ENCODE measurements at regions of chr20 and their contacts with region 1.

Region 1: GRCh38 chr20:35883778-35884540 is 70.3 kb downstream of the SCAND1 start:
- DNase-seq: peak; percentile 72
- ATAC-seq: peak; percentile 98
- H3K4me3 Mint-ChIP-seq: no peak overlapping the region
- H3K27ac Mint-ChIP-seq: peak overlapping the region; percentile 85
- H3K4me1 Mint-ChIP-seq: peaks cover 11% of the 10 kb centered on the region
- H3K27me3 Mint-ChIP-seq: no peaks in the 10 kb centered on the region
- CTCF ChIP-seq: no peak

Region 2: GRCh38 chr20:35849706-35850105 is 34.3 kb before region 1 on chr20:
- CTCF ChIA-PET with region 1: interaction called, 11 read pairs
- POLR2A ChIA-PET with region 1: no interaction called
- DNase-seq: no peak
- ATAC-seq: no peak
- H3K4me3 Mint-ChIP-seq: no peak overlapping the region
- H3K27ac Mint-ChIP-seq: peak overlapping the region; percentile 44
- H3K4me1 Mint-ChIP-seq: no peaks in the 10 kb centered on the region
- H3K27me3 Mint-ChIP-seq: no peaks in the 10 kb centered on the region
- CTCF ChIP-seq: no peak

Region 3: DNA sequence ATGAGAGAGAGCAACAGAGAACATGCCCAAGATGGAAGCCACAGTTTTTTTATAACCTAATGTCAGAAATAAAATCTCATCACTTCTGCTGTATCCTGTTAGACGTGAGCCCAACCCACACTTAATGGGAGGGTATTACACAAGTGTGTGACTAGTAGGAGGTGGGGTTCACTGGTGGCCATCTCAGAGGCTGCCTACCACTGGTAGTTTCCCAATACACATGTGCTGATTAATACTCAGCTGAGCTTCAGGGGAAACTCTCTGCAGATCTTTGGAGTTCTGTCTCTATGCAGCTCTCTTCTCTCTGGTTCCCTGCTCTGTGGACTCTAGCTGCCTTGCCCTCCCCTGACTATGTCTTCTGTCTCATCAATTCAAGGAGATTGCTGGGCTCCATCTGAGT is 120.1 kb after region 1 on chr20:
- CTCF ChIA-PET with region 1: no interaction called
- POLR2A ChIA-PET with region 1: no interaction called
- DNase-seq: no peak
- ATAC-seq: no peak
- H3K4me3 Mint-ChIP-seq: no peak overlapping the region
- H3K27ac Mint-ChIP-seq: no peak overlapping the region
- H3K4me1 Mint-ChIP-seq: no peaks in the 10 kb centered on the region
- H3K27me3 Mint-ChIP-seq: peaks cover 16% of the 10 kb centered on the region
- CTCF ChIP-seq: no peak

Measured in WTC11 (cell line).